ENCODE measurements at regions of chr15 and their contacts with region 1.

Region 1: GRCh38 chr15:82952158-82953081 is at the start of gene HOMER2:
- DNase-seq: no peak
- ATAC-seq: peak; percentile 82
- H3K4me3 ChIP-seq: peak within 1 kb of the TSS; percentile 19
- H3K27ac ChIP-seq: no peak within 1 kb of the TSS
- H3K4me1 ChIP-seq: no peaks in the 10 kb centered on the region
- H3K27me3 ChIP-seq: peaks cover 24% of the 10 kb centered on the region
- CTCF ChIP-seq: no peak
- POLR2A ChIP-seq: no peak
- RAD21 ChIP-seq: no peak
- total RNA-seq, gene HOMER2: 0.54 and 0.56 TPM in 2 replicates

Region 2: GRCh38 chr15:82737975-82738374 is 214.4 kb before region 1 on chr15:
- CTCF ChIA-PET with region 1: no interaction called
- POLR2A ChIA-PET with region 1: no interaction called
- dilution Hi-C with region 1: no loop called
- in situ Hi-C with region 1: no loop called
- intact Hi-C with region 1: no loop called
- DNase-seq: peak; percentile 15
- ATAC-seq: no peak
- H3K4me3 ChIP-seq: no peak overlapping the region
- H3K27ac ChIP-seq: no peak overlapping the region
- H3K4me1 ChIP-seq: no peaks in the 10 kb centered on the region
- H3K27me3 ChIP-seq: no peaks in the 10 kb centered on the region
- CTCF ChIP-seq: no peak
- POLR2A ChIP-seq: no peak
- RAD21 ChIP-seq: no peak

Region 3: GRCh38 chr15:82849556-82850512 is 102.6 kb before region 1 on chr15:
- CTCF ChIA-PET with region 1: no interaction called
- POLR2A ChIA-PET with region 1: no interaction called
- dilution Hi-C with region 1: no loop called
- in situ Hi-C with region 1: no loop called
- intact Hi-C with region 1: loop called (anchors 10 kb)
- DNase-seq: peak; percentile 74
- ATAC-seq: peak; percentile 55
- H3K4me3 ChIP-seq: no peak overlapping the region
- H3K27ac ChIP-seq: 0 out of 2 replicates have a peak overlapping the region, but pooled peaks have one; percentile 19
- H3K4me1 ChIP-seq: peaks cover 11% of the 10 kb centered on the region; the same call in 1 of the 2 replicates
- H3K27me3 ChIP-seq: no peaks in the 10 kb centered on the region
- CTCF ChIP-seq: peak; percentile 56
- POLR2A ChIP-seq: no peak
- RAD21 ChIP-seq: peak; percentile 59

Region 4: GRCh38 chr15:83066734-83067637 is 114.6 kb after region 1 on chr15 and contains the start of gene BTBD1:
- CTCF ChIA-PET with region 1: no interaction called
- POLR2A ChIA-PET with region 1: no interaction called
- dilution Hi-C with region 1: no loop called
- in situ Hi-C with region 1: no loop called
- intact Hi-C with region 1: no loop called
- DNase-seq: peak; percentile 96
- ATAC-seq: peak; percentile 98
- H3K4me3 ChIP-seq: peak within 1 kb of the TSS; percentile 90
- H3K27ac ChIP-seq: peak within 1 kb of the TSS; percentile 82
- H3K4me1 ChIP-seq: peaks cover 7% of the 10 kb centered on the region
- H3K27me3 ChIP-seq: no peaks in the 10 kb centered on the region
- CTCF ChIP-seq: 0 out of 2 replicates have a peak, but pooled peaks have one; percentile 1
- POLR2A ChIP-seq: peak; percentile 94
- RAD21 ChIP-seq: no peak
- total RNA-seq, gene BTBD1: 78.7 and 90.5 TPM in 2 replicates

Measured in IMR-90 (cell line).